Dorsolateral prefrontal cortex (tissue), 120 donors: ENCODE measurements at regions of chr1 and their contacts with region 1.

Region 1: GRCh38 chr1:33137800-33138199 is 44.0 kb downstream of the TRIM62 start:
- DNase-seq: peak in 6 of 10 donors; percentile 39 to 68 (median 46)
- H3K4me3 ChIP-seq: no peak overlapping the region
- H3K27ac ChIP-seq: no peak overlapping the region
- H3K27me3 ChIP-seq: no peaks in the 10 kb centered on the region
- CTCF ChIP-seq: peak in 55 of 56 donors; percentile 38 to 73 (median 60)

Region 2: DNA sequence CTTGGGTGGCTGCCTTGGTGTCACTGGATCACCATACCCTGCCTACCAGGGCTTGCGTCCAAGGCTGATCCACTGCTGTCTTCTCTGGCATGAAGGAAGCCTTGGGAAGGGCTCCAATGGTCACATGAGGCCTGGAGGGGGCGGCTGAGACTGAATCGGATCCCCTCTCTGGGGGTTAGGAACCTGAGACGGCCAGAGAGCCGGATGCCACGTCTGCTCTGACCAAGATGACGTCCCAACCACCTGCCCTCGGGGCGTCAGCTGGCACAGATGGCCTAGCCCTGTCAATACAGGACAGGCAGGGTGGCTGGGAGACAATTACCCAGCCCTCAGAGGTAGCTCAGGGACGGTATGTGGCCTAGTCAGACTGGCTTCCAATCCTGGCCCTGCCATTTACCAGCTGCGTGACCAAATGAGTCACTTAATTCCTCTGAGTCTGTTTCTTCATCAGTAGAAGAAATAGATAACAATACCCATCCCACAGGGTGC is 38.6 kb after region 1 on chr1:
- intact Hi-C with region 1: loop called in 1 of 2 experiments (anchors 5 kb)
- DNase-seq: peak in 1 of 10 donors; percentile 48
- H3K4me3 ChIP-seq: peak overlapping the region in 1 of 59 donors; percentile 21
- H3K27ac ChIP-seq: peak overlapping the region; percentile 2 to 92 (median 77)
- H3K27me3 ChIP-seq: no peaks in the 10 kb centered on the region
- CTCF ChIP-seq: no peak

Region 3: DNA sequence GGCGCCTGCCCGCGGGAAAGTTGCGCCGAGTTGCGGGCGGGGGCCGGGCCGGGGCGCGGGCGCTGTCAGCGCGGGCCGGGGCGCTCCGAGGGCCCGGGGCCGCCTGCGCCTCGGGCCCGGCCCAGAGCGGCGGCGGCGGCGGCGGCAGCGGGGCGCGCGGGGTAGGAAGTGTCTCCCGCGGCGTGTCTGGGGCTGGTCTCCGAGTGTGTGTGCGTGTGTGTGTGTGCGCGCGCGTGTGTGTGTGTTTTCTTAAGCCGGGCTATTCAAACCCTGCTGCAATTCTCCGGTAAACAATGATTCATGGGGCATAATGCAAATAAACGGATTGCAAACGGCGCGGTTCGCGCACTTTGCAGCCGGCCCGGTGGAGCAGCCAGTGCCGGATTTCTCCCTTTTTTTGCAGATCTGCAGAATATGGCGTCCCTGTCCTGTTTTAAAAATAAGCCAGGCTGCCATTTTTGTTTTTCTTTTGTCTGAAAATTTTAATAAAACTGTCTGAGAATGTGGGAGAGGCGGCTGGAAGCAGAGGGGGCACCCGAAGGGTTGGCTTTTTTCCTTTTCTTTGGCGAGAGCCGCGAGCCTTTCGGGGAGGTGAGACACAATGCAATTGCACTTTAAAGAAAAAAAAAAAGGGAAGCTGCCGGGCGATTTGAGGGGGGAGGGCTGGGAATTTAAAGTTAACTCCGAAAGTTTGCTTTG is 119.0 kb after region 1 on chr1:
- intact Hi-C with region 1: loop called in 1 of 2 experiments (anchors 5 kb)
- DNase-seq: peak in 7 of 10 donors; percentile 26 to 53 (median 44)
- H3K4me3 ChIP-seq: peak overlapping the region; percentile 36 to 85 (median 74)
- H3K27ac ChIP-seq: peak overlapping the region in 58 of 59 donors; percentile 23 to 92 (median 82)
- H3K27me3 ChIP-seq: no peaks in the 10 kb centered on the region
- CTCF ChIP-seq: no peak

Region 4: GRCh38 chr1:33295450-33296081 is 157.8 kb after region 1 on chr1:
- intact Hi-C with region 1: loop called in 1 of 2 experiments (anchors 10 kb)
- DNase-seq: peak; percentile 82 to 94 (median 91)
- H3K4me3 ChIP-seq: peak overlapping the region in 1 of 59 donors; percentile 14
- H3K27ac ChIP-seq: peak overlapping the region in 41 of 59 donors; percentile 0 to 72 (median 51)
- H3K27me3 ChIP-seq: no peaks in the 10 kb centered on the region
- CTCF ChIP-seq: peak; percentile 90 to 100 (median 96)

Region 5: GRCh38 chr1:33466159-33466558 is 328.4 kb after region 1 on chr1:
- intact Hi-C with region 1: loop called in 1 of 2 experiments (anchors 5 kb)
- DNase-seq: no peak
- H3K4me3 ChIP-seq: no peak overlapping the region
- H3K27ac ChIP-seq: no peak overlapping the region
- H3K27me3 ChIP-seq: no peaks in the 10 kb centered on the region
- CTCF ChIP-seq: no peak